ENCODE measurements at regions of chr7 and their contacts with region 1.

Region 1: DNA sequence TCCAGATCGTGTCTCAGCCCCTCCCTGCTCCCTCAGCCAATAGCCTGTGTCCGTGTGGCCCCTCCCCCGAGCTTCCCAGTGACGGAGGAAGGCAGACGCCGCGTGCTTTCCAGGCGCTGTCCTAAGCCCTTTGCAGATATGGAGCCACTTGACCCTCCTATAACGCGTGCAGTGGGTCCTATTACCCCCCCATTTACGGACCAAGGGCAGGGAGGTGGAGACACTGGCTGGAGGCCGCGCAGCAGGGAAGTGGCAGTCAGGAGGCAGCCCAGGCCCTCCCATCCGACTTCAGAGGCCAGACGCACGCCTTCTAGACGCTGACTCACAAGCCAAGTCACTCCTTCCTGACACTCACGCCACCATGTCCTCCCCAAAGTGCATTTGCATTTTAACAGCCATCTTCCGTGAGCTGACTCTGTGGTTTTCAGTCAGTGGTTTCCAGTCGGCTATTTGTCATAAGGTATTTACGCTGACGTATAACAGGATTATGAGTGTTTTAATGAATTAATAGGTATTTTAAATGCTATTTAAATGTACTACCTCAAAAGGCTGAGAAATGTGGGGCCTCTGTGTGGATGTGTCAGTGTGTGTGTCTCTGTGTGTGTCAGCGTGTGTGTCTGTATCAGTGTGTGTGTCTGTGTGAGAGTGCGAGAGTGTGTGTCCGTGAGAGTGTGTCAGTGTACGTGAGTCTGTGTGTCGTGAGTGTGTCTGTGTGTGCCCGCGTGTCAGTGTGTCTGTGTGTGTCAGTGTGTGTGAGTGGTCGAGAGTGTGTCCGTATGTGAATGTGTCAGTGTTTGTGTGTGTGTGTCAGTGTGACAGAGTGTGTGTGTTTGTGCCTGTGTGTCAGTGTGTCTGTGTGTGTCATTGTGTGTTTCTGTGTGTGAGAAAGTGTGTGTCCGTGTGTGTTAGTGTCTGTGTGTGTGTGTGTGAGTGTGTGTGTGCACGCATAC is 92.0 kb upstream of the INSIG1 start:
- DNase-seq: peak; percentile 95

Region 2: GRCh38 chr7:155297517-155298287 is 92.1 kb after region 1 on chr7 and contains the start of gene INSIG1:
- CTCF ChIA-PET with region 1: interaction called, 3 read pairs
- POLR2A ChIA-PET with region 1: interaction called, 28 read pairs
- DNase-seq: peak; percentile 100